Activated naive CD4-positive, alpha-beta T cell treated with anti-CD3 and anti-CD28 coated beads for 36 hours (primary cell): ENCODE measurements at regions of chr6 and their contacts with region 1.

Region 1: GRCh38 chr6:5214570-5215052 is 46.1 kb downstream of the LYRM4 start:
- DNase-seq: peak; percentile 51
- H3K4me3 Mint-ChIP-seq: no peak overlapping the region
- H3K27ac Mint-ChIP-seq: no peak overlapping the region
- H3K4me1 Mint-ChIP-seq: peaks cover 4% of the 10 kb centered on the region
- H3K27me3 Mint-ChIP-seq: no peaks in the 10 kb centered on the region

Region 2: GRCh38 chr6:4732691-4733315 is 481.8 kb before region 1 on chr6:
- CTCF ChIA-PET with region 1: no interaction called
- intact Hi-C with region 1: no loop called
- DNase-seq: no peak
- H3K4me3 Mint-ChIP-seq: no peak overlapping the region
- H3K27ac Mint-ChIP-seq: no peak overlapping the region
- H3K4me1 Mint-ChIP-seq: peaks cover 6% of the 10 kb centered on the region
- H3K27me3 Mint-ChIP-seq: peaks cover 10% of the 10 kb centered on the region

Region 3: DNA sequence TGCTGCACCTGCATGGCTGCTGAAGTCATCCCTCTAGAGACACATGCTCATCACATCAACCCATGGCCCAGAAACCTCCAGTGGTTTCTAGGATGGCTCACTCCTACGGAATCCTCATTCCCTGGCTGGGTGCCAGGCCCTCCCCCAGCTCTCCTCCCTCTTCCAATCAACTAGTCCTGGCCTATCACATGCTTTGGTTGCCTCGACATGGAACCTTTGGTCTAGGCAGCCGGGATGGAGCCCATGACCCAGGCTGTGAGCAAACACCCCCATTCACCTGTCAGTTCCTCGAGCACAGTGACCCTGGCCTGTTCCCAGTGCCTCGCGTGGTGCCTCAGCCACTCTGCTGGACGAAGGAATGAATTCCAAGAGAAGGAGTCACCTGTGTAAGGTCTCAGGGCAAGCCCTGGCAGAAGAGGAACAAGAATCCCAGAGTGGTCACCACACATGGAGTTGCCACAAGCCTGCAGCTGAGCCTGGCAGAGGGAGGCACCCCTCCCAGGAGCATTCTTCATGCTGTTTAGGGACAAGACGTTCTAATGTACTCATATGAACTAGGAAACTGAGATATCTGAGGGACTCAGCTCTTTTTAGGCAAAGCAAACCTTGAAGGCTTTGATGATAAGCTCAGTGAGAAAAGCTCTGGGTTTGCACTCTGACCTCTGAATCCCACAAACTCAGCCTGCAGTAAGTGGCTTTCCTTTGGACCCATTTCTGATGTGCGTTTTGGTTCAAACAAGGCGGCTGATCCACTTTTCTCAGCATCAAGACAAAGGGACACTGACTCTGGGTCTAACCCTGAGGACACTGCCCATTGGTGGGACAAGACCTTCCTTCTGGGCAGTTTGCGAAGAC is 89.2 kb before region 1 on chr6:
- CTCF ChIA-PET with region 1: no interaction called
- intact Hi-C with region 1: no loop called
- DNase-seq: no peak
- H3K4me3 Mint-ChIP-seq: no peak overlapping the region
- H3K27ac Mint-ChIP-seq: no peak overlapping the region
- H3K4me1 Mint-ChIP-seq: no peaks in the 10 kb centered on the region
- H3K27me3 Mint-ChIP-seq: no peaks in the 10 kb centered on the region

Region 4: DNA sequence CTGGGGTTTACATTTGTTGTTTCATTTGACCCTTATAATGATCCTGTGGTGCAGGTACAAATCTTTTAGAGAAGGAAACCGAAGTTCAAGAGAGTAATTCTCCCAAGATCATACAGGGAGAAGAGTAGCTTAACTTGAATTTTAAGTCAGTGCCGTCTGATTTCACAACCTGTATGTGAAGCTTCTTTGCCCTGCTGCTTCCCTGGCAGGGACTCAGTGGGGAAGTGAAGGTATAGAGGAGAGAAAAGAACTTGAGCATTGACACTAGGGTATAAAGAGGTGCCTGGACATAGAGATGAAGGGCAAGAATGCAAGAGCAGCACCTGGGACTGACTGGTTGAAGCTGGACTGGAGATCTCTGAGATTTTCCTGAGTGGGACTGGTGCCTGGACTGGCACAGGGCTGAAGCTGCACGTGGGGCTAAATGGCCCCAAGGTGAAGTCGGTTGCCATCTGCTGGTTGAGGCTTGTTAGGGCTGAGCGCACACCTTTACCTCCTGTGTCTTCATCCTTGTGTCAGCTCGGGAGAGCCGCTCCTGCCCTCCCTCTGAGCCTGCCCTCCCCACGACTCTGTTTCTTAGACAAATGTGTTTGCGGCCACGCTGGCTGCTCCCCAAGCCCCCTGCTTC is 88.5 kb after region 1 on chr6:
- CTCF ChIA-PET with region 1: interaction called, 5 read pairs
- intact Hi-C with region 1: loop called (anchors 1 kb)
- DNase-seq: peak; percentile 73
- H3K4me3 Mint-ChIP-seq: no peak overlapping the region
- H3K27ac Mint-ChIP-seq: peak overlapping the region; percentile 59
- H3K4me1 Mint-ChIP-seq: peaks cover 36% of the 10 kb centered on the region
- H3K27me3 Mint-ChIP-seq: no peaks in the 10 kb centered on the region

Region 5: DNA sequence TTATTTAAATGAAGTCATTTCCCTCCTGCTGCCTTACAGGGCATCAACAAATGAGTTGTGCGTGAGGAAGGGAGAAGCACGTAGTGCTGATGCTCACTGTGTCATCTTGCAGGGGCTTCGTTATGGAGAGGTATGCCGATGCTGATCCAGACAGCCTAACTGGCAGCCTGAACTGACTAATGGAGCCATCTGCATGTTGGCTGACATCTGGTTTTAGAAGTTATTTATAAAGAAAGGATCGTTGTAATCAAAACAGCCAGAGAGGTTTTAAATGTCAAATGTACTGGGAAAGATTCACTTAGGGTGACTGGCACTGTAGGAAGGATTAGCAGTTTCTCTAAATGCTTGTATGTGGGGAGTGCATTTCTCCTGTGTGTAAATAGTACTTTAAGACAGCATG is 101.3 kb after region 1 on chr6:
- CTCF ChIA-PET with region 1: no interaction called
- intact Hi-C with region 1: no loop called
- DNase-seq: no peak
- H3K4me3 Mint-ChIP-seq: no peak overlapping the region
- H3K27ac Mint-ChIP-seq: no peak overlapping the region
- H3K4me1 Mint-ChIP-seq: peaks cover 26% of the 10 kb centered on the region
- H3K27me3 Mint-ChIP-seq: no peaks in the 10 kb centered on the region

Region 6: DNA sequence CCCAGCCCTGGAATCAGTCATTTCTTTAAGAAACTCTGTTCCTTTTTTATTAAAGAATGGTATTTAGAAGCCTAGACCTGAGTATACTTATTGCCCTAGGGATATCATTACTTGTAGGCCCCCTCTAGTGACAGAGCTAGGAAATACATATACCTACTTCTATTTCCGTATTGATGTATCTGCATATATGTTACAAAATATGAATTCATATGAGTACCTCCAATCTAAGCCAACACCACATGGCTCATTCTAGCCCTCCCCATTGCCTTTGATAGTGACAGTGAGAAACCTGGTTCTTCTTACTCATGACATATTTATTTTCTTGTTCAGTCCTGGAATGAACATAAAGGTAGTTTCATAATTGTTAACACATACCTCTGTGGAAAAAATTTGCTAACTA is 183.9 kb after region 1 on chr6:
- CTCF ChIA-PET with region 1: no interaction called
- intact Hi-C with region 1: loop called (anchors 2 kb)
- DNase-seq: peak; percentile 64
- H3K4me3 Mint-ChIP-seq: no peak overlapping the region
- H3K27ac Mint-ChIP-seq: no peak overlapping the region
- H3K4me1 Mint-ChIP-seq: peaks cover 22% of the 10 kb centered on the region
- H3K27me3 Mint-ChIP-seq: no peaks in the 10 kb centered on the region